AG04449 (cell line): ENCODE measurements at regions of chr4 and their contacts with region 1.

Region 1: GRCh38 chr4:185096032-185096653 is 46.9 kb upstream of the SLC25A4 start:
- DNase-seq: no peak
- H3K4me3 ChIP-seq: no peak overlapping the region
- CTCF ChIP-seq: peak; percentile 38

Region 2: DNA sequence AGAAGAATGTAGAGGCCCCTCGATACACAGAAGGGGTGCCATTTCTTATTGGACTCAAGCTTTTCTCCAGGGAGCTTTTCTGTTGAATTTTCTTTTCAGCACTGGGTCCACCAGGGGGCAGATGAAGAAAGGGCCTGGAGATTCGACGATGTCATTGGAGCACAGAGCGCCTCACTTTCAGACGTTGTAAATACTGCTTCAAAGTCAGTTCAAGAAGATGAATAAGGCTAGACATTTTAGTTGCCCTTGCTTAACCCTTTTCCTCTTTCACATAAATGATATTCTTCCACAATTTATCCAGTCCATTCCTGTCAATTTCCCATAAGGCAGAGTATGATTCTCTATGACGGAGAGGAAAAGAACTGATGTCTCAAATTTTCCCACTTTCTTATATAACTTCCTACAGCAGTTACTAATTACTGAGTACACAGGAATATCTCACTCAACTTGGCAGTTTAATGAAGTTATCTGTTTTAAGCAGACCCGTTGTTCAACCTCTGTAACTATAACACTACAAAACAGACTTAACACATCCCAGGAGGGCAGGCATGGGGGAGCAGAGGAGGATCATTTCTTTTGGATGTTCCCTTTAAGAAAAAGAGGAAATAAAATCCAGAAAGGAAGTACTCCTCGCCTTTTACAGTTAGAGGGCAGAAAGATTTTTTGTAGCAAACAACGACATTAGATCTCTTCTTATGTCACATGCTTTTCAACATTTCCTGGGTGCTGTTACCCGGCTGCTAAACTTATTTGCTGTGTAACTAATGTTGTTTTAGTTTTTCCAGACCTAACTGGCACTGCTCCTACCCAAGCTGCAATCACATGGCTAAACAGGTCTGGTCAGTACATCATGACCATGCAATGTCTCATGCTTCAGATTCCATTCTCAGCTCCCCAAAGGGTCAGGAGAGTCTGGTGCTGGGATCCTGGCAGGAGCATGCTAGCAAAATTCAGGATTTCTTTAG is 350.0 kb before region 1 on chr4:
- CTCF ChIA-PET with region 1: interaction called, 16 read pairs
- POLR2A ChIA-PET with region 1: no interaction called
- DNase-seq: peak; percentile 87
- H3K4me3 ChIP-seq: no peak overlapping the region
- CTCF ChIP-seq: peak; percentile 75

Region 3: DNA sequence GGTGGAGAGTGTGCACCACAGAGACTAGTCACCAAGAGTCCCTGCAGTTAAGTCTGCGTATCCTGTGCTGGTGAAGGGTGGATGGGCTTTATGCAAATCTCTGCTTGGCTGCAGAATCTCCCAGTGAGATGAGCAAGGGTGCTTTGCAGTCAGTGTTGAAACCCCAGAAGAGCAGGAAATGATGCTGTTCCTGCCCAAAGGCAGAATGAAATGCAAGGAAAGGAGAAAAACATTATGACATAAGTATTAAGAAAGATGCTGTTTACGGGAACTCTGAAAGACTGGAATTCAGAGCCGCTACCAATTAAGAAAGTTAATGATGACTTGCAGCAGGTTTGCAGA is 245.0 kb before region 1 on chr4:
- CTCF ChIA-PET with region 1: no interaction called
- POLR2A ChIA-PET with region 1: no interaction called
- DNase-seq: no peak
- H3K4me3 ChIP-seq: no peak overlapping the region
- CTCF ChIP-seq: no peak

Region 4: GRCh38 chr4:185005216-185005819 is 90.8 kb before region 1 on chr4:
- CTCF ChIA-PET with region 1: interaction called, 23 read pairs
- POLR2A ChIA-PET with region 1: no interaction called
- DNase-seq: no peak
- H3K4me3 ChIP-seq: no peak overlapping the region; the same call in 1 of the 2 replicates
- CTCF ChIP-seq: peak; percentile 93

Region 5: GRCh38 chr4:185039508-185040273 is 56.5 kb before region 1 on chr4:
- CTCF ChIA-PET with region 1: interaction called, 40 read pairs
- POLR2A ChIA-PET with region 1: no interaction called
- DNase-seq: peak; percentile 5
- H3K4me3 ChIP-seq: peak overlapping the region; percentile 36
- CTCF ChIP-seq: peak; percentile 58

Region 6: GRCh38 chr4:185082561-185082960 is 13.6 kb before region 1 on chr4:
- CTCF ChIA-PET with region 1: interaction called, 54 read pairs
- POLR2A ChIA-PET with region 1: no interaction called
- DNase-seq: no peak
- H3K4me3 ChIP-seq: no peak overlapping the region
- CTCF ChIP-seq: no peak

Region 7: DNA sequence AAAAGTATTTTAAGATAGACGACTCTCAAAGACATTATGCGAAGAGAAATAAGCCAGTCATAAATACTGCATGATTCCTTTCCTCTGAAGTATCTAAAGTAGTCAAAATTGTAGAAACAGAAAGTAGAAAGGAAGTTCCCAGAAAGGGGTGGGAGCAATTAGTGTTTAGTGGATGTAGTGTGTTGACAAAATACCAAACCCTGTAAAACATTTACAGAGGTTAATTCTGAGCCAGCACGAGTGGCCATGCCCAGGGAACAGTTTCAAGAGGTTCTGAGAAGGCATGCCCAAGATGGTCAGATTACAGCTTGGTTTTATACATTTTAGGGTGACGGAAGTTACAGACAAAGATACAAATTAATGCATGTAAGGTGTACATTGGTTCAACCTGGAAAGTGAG is 12.5 kb after region 1 on chr4:
- CTCF ChIA-PET with region 1: interaction called, 24 read pairs
- POLR2A ChIA-PET with region 1: interaction called, 4 read pairs
- DNase-seq: no peak
- H3K4me3 ChIP-seq: no peak overlapping the region
- CTCF ChIP-seq: no peak

Region 8: DNA sequence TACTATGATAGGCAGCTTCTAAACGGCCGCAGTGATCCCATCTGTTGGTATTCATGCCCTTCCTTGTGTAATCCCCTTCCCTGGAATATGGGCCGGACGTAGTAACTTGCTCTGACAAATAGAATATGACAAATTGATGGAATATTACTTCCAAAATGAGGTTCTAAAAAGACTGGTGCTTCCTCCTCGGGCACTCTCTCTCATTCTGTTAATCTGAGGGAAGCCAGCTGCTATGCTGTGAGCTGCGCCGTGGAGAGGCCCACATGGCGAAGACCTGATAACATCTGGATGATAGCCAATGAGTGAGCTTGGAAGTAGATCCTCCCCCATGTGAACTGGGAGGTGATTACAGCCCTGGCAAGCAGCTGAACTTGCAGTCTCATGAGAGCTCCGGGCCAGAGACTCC is 19.7 kb after region 1 on chr4:
- CTCF ChIA-PET with region 1: interaction called, 22 read pairs
- POLR2A ChIA-PET with region 1: interaction called, 4 read pairs
- DNase-seq: peak; percentile 36
- H3K4me3 ChIP-seq: no peak overlapping the region
- CTCF ChIP-seq: no peak